Activated CD8-positive, alpha-beta T cell treated with anti-CD3 and anti-CD28 coated beads for 36 hours (primary cell): ENCODE measurements at regions of chr2 and their contacts with region 1.

Region 1: DNA sequence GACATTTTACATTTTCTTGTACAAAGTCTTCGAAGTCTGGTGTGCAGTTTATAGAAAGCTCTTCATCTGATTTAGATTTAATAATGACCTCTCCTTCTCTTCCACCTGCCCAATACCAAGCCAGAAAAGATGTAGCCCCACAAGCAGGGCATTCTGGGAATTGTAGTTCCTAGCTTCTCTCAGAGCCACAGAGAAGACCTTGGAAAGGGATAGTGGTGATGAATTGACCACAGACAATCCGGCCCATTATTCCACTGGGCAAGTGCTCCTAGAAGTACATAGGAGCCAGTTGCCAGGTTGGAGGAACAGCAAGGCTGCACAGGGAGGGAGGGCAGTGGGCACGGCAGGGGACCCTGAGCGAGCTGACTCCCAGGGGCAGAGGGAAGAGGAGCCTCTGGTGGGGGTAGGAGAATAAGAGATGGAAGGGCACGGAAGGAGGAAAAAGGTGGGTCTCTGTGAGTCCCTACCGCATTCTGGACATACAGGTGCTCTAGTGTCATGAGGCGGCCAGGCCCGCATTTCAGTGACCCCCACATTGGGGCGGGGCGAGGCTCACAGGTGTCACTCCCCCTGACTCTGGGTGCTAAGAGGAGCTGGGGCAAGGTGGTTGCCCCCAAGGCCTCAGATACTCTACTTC is 152.5 kb upstream of the HAAO start:
- DNase-seq: no peak
- ATAC-seq: no peak
- H3K4me3 Mint-ChIP-seq: no peak overlapping the region
- H3K27ac Mint-ChIP-seq: no peak overlapping the region
- H3K4me1 Mint-ChIP-seq: peaks cover 2% of the 10 kb centered on the region
- H3K27me3 Mint-ChIP-seq: no peaks in the 10 kb centered on the region
- CTCF ChIP-seq: no peak

Region 2: DNA sequence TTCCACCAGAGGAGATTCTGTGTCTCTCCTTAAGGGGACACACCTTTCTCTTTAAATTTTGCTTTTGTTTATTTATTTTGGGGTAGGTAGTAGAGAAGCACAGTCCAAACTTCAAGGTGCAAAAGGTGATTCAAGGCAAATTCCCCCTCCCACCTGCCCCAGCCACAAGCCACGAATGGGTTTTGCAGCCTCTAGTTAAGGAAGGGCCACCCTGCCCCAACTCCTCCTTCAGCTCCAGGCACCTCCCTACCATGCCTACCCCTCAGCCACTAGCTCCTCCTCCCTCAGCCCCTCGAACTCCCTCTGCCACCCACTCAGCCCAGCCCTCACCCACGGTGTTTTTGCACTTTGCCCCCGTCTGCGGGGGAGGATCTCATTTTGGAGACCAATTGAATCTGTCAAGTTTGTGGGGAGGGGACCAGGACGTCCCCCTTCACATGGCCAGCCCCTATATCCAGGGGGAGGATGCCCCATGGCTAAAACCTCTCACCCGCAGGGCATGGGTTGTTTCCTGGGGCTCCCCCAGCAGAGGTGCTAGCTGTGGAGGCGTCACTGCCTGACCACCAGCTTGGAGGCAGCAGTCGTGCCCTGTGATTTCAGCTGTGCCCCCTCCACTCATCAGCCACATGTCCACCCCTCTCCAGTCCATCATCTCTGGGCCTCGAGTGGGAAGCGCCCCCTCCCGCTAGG is 157.0 kb before region 1 on chr2:
- CTCF ChIA-PET with region 1: no interaction called
- POLR2A ChIA-PET with region 1: no interaction called
- intact Hi-C with region 1: no loop called
- DNase-seq: peak; percentile 68
- ATAC-seq: peak; percentile 80
- H3K4me3 Mint-ChIP-seq: no peak overlapping the region
- H3K27ac Mint-ChIP-seq: no peak overlapping the region
- H3K4me1 Mint-ChIP-seq: peaks cover 13% of the 10 kb centered on the region
- H3K27me3 Mint-ChIP-seq: peaks cover 28% of the 10 kb centered on the region
- CTCF ChIP-seq: no peak

Region 3: GRCh38 chr2:42931146-42931817 is 13.6 kb before region 1 on chr2:
- CTCF ChIA-PET with region 1: interaction called, 14 read pairs
- POLR2A ChIA-PET with region 1: no interaction called
- intact Hi-C with region 1: no loop called
- DNase-seq: no peak
- ATAC-seq: no peak
- H3K4me3 Mint-ChIP-seq: no peak overlapping the region
- H3K27ac Mint-ChIP-seq: no peak overlapping the region
- H3K4me1 Mint-ChIP-seq: no peaks in the 10 kb centered on the region
- H3K27me3 Mint-ChIP-seq: no peaks in the 10 kb centered on the region
- CTCF ChIP-seq: no peak

Region 4: GRCh38 chr2:42974721-42975717 is 30.1 kb after region 1 on chr2:
- CTCF ChIA-PET with region 1: interaction called, 10 read pairs
- POLR2A ChIA-PET with region 1: no interaction called
- intact Hi-C with region 1: no loop called
- DNase-seq: peak; percentile 64
- ATAC-seq: peak; percentile 75
- H3K4me3 Mint-ChIP-seq: no peak overlapping the region
- H3K27ac Mint-ChIP-seq: no peak overlapping the region
- H3K4me1 Mint-ChIP-seq: peaks cover 16% of the 10 kb centered on the region
- H3K27me3 Mint-ChIP-seq: no peaks in the 10 kb centered on the region
- CTCF ChIP-seq: peak; percentile 85

Region 5: GRCh38 chr2:43576981-43577892 is 632.3 kb after region 1 on chr2:
- CTCF ChIA-PET with region 1: interaction called, 19 read pairs
- POLR2A ChIA-PET with region 1: no interaction called
- intact Hi-C with region 1: no loop called
- DNase-seq: peak; percentile 40
- ATAC-seq: no peak
- H3K4me3 Mint-ChIP-seq: no peak overlapping the region
- H3K27ac Mint-ChIP-seq: no peak overlapping the region
- H3K4me1 Mint-ChIP-seq: peaks cover 7% of the 10 kb centered on the region
- H3K27me3 Mint-ChIP-seq: no peaks in the 10 kb centered on the region
- CTCF ChIP-seq: peak; percentile 86